Heart right ventricle (tissue), 16 donors: ENCODE measurements at regions of chr6 and their contacts with region 1.

Region 1: GRCh38 chr6:7238900-7239589 is 74.0 kb downstream of the SSR1 start:
- DNase-seq: peak; percentile 88 to 89
- ATAC-seq: peak; percentile 66 to 90 (median 85)
- H3K4me3 ChIP-seq: no peak overlapping the region
- H3K27ac ChIP-seq: peak overlapping the region in 8 of 10 donors; percentile 10 to 65 (median 34)
- H3K4me1 ChIP-seq: peaks cover 5 to 65% (median 42%) of the 10 kb centered on the region in 9 donors
- H3K27me3 ChIP-seq: no peaks in the 10 kb centered on the region
- CTCF ChIP-seq: peak; percentile 51 to 78 (median 71)

Region 2: GRCh38 chr6:6556738-6557505 is 682.1 kb before region 1 on chr6:
- intact Hi-C with region 1: loop called in 4 of 10 experiments (anchors 10 kb)
- DNase-seq: peak; percentile 23 to 49
- ATAC-seq: peak; percentile 70 to 86 (median 76)
- H3K4me3 ChIP-seq: no peak overlapping the region
- H3K27ac ChIP-seq: no peak overlapping the region
- H3K4me1 ChIP-seq: peaks cover 0 to 14% (median 0%) of the 10 kb centered on the region in 9 donors
- H3K27me3 ChIP-seq: peaks cover 0 to 5% (median 0%) of the 10 kb centered on the region in 7 donors
- CTCF ChIP-seq: peak; percentile 80 to 96 (median 93)

Region 3: DNA sequence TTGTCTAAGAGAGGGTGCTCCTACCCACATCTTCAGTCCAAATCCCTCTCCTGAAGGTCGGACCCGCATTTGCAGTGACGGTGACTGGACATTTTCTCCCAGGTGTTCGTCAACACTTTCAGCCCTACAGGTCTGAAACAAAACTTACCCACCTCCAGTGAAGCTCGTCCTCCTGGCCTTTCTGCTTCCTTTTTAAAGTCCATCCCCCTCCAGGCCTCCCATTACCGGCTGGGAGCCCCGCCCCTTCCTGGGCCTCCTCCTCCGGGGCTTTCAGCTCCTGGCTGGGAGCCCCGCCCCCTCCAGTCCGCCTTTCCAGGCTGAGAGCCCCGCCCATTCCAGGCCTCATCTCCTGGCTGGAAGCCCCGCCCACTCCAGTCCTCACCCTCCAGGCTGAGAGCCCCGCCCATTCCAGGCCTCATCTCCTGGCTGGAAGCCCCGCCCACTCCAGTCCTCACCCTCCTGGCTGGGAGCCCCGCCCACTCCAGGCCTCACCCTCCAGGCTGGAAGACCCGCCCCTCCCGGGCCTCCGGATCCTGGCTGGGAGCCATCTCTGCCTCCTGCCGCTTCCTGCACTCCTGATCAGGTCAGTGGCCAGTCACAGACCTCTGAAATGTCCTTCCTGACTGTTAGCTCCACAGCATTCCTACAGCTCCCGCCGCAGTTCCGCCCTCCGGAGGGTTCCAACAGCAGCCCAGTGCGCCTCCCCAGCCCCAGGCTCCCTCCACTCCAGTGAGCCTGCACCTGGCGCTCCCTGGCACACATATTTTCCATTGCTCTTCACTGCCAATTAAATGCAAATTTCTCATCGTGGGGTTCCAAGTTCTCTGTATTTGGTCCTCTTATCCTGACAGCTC is 552.1 kb before region 1 on chr6:
- intact Hi-C with region 1: loop called in 1 of 10 experiments (anchors 10 kb)
- DNase-seq: peak; percentile 95
- ATAC-seq: peak; percentile 91 to 96 (median 94)
- H3K4me3 ChIP-seq: peak overlapping the region; percentile 11 to 50 (median 38)
- H3K27ac ChIP-seq: peak overlapping the region in 9 of 10 donors; percentile 66 to 94 (median 88)
- H3K4me1 ChIP-seq: peaks cover 0 to 85% (median 41%) of the 10 kb centered on the region in 9 donors
- H3K27me3 ChIP-seq: no peaks in the 10 kb centered on the region
- CTCF ChIP-seq: no peak

Region 4: GRCh38 chr6:6890400-6890858 is 348.6 kb before region 1 on chr6:
- intact Hi-C with region 1: loop called in 2 of 10 experiments (anchors 10 kb)
- DNase-seq: peak; percentile 48 to 62
- ATAC-seq: peak; percentile 30 to 72 (median 52)
- H3K4me3 ChIP-seq: peak overlapping the region in 1 of 10 donors; percentile 0
- H3K27ac ChIP-seq: peak overlapping the region in 8 of 10 donors; percentile 7 to 85 (median 78)
- H3K4me1 ChIP-seq: peaks cover 9 to 66% (median 36%) of the 10 kb centered on the region in 9 donors
- H3K27me3 ChIP-seq: no peaks in the 10 kb centered on the region
- CTCF ChIP-seq: no peak

Region 5: GRCh38 chr6:6918216-6918983 is 320.6 kb before region 1 on chr6:
- intact Hi-C with region 1: loop called in 1 of 10 experiments (anchors 10 kb)
- DNase-seq: no peak
- ATAC-seq: peak in 2 of 8 donors; percentile 36 to 50
- H3K4me3 ChIP-seq: no peak overlapping the region
- H3K27ac ChIP-seq: no peak overlapping the region
- H3K4me1 ChIP-seq: peaks cover 3 to 28% (median 9%) of the 10 kb centered on the region in 9 donors
- H3K27me3 ChIP-seq: no peaks in the 10 kb centered on the region
- CTCF ChIP-seq: no peak

Region 6: GRCh38 chr6:7051233-7052114 is 187.6 kb before region 1 on chr6:
- intact Hi-C with region 1: loop called in 1 of 10 experiments (anchors 10 kb)
- DNase-seq: peak; percentile 38 to 64
- ATAC-seq: peak; percentile 58 to 86 (median 78)
- H3K4me3 ChIP-seq: peak overlapping the region; percentile 44 to 76 (median 67)
- H3K27ac ChIP-seq: peak overlapping the region in 9 of 10 donors; percentile 54 to 92 (median 74)
- H3K4me1 ChIP-seq: peaks cover 0 to 50% (median 21%) of the 10 kb centered on the region in 9 donors
- H3K27me3 ChIP-seq: peaks cover 0 to 6% (median 0%) of the 10 kb centered on the region in 7 donors
- CTCF ChIP-seq: no peak

Region 7: GRCh38 chr6:7112741-7113313 is 126.2 kb before region 1 on chr6:
- intact Hi-C with region 1: loop called in 6 of 10 experiments (anchors 1 to 10 kb)
- DNase-seq: peak in 1 of 2 donors; percentile 30
- ATAC-seq: peak in 4 of 8 donors; percentile 18 to 28 (median 22)
- H3K4me3 ChIP-seq: peak overlapping the region in 3 of 10 donors; percentile 11 to 15 (median 14)
- H3K27ac ChIP-seq: peak overlapping the region in 9 of 10 donors; percentile 20 to 96 (median 37)
- H3K4me1 ChIP-seq: peaks cover 13 to 82% (median 67%) of the 10 kb centered on the region in 9 donors
- H3K27me3 ChIP-seq: no peaks in the 10 kb centered on the region
- CTCF ChIP-seq: no peak